CD4-positive, alpha-beta memory T cell (primary cell): ENCODE measurements at regions of chr17 and their contacts with region 1.

Region 1: GRCh38 chr17:32319548-32319905 is 22.4 kb downstream of the C17orf75 start:
- DNase-seq: peak; percentile 55 to 73 (median 61)
- H3K4me3 ChIP-seq: peak overlapping the region in 1 of 2 donors; percentile 40
- H3K4me3 Mint-ChIP-seq: peak overlapping the region; percentile 53 to 80 (median 75)
- H3K27ac ChIP-seq: no peak overlapping the region
- H3K27ac Mint-ChIP-seq: peak overlapping the region in 1 of 7 donors; percentile 36
- H3K4me1 ChIP-seq: peaks cover 14% of the 10 kb centered on the region
- H3K4me1 Mint-ChIP-seq: peaks cover 7 to 25% (median 12%) of the 10 kb centered on the region in 4 donors
- H3K27me3 ChIP-seq: no peaks in the 10 kb centered on the region
- H3K27me3 Mint-ChIP-seq: peaks cover 3 to 7% of the 10 kb centered on the region in 2 donors

Region 2: GRCh38 chr17:32206861-32207260 is 112.7 kb before region 1 on chr17:
- CTCF ChIA-PET with region 1: no interaction called
- POLR2A ChIA-PET with region 1: no interaction called
- intact Hi-C with region 1: loop called (anchors 2 kb)
- DNase-seq: no peak
- H3K4me3 ChIP-seq: no peak overlapping the region
- H3K4me3 Mint-ChIP-seq: no peak overlapping the region
- H3K27ac ChIP-seq: no peak overlapping the region
- H3K27ac Mint-ChIP-seq: no peak overlapping the region
- H3K4me1 ChIP-seq: no peaks in the 10 kb centered on the region
- H3K4me1 Mint-ChIP-seq: peaks cover 0 to 3% (median 0%) of the 10 kb centered on the region in 4 donors
- H3K27me3 ChIP-seq: no peaks in the 10 kb centered on the region
- H3K27me3 Mint-ChIP-seq: no peaks in the 10 kb centered on the region

Region 3: GRCh38 chr17:32253117-32253611 is 66.4 kb before region 1 on chr17:
- CTCF ChIA-PET with region 1: interaction called, 61 read pairs
- POLR2A ChIA-PET with region 1: no interaction called
- intact Hi-C with region 1: loop called (anchors 1 kb)
- DNase-seq: peak; percentile 41 to 62 (median 50)
- H3K4me3 ChIP-seq: no peak overlapping the region
- H3K4me3 Mint-ChIP-seq: no peak overlapping the region
- H3K27ac ChIP-seq: no peak overlapping the region
- H3K27ac Mint-ChIP-seq: no peak overlapping the region
- H3K4me1 ChIP-seq: no peaks in the 10 kb centered on the region
- H3K4me1 Mint-ChIP-seq: no peaks in the 10 kb centered on the region
- H3K27me3 ChIP-seq: no peaks in the 10 kb centered on the region
- H3K27me3 Mint-ChIP-seq: peaks cover 1 to 2% of the 10 kb centered on the region in 2 donors

Region 4: GRCh38 chr17:32275060-32276042 is 44.2 kb before region 1 on chr17:
- CTCF ChIA-PET with region 1: no interaction called
- POLR2A ChIA-PET with region 1: no interaction called
- intact Hi-C with region 1: no loop called
- DNase-seq: no peak
- H3K4me3 ChIP-seq: no peak overlapping the region
- H3K4me3 Mint-ChIP-seq: no peak overlapping the region
- H3K27ac ChIP-seq: no peak overlapping the region
- H3K27ac Mint-ChIP-seq: no peak overlapping the region
- H3K4me1 ChIP-seq: no peaks in the 10 kb centered on the region
- H3K4me1 Mint-ChIP-seq: no peaks in the 10 kb centered on the region
- H3K27me3 ChIP-seq: peaks cover 2% of the 10 kb centered on the region
- H3K27me3 Mint-ChIP-seq: peaks cover 2 to 14% of the 10 kb centered on the region in 2 donors

Region 5: DNA sequence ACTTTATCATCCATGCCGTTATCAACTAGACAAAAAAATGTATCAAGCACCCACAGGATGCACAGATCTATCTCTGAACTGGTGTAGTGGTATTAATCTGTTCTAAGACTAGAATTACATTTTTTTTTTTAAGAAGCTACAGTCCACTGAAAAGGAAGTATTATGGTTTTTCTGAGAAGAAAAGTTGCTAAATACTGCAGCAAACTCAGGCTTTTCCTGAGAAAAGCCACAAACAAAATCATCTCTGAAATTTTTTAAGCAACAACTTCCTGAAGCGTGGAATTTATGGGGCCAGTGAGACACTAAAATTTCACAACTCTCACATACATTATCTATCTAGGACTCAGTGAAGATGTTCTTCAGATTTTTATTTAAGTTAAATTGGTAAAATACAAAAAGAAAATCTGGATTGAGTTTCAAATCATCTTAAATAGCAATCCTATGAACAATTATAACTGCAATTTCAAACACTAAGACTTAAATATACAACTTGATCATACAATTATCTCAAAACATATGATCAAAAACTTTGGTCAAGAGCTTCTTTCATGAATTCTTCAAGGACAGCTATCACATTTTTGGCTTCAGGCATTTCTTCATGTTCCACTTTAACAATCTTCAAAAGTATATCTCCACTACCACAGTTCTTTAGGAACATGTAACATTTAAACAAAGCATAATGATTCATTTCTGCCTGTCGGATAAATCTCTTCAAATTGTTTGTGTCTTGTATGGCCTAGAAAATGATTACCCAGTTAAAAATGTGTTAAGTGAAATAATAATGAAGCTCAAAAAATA is 11.9 kb after region 1 on chr17:
- CTCF ChIA-PET with region 1: interaction called, 36 read pairs
- POLR2A ChIA-PET with region 1: no interaction called
- intact Hi-C with region 1: no loop called
- DNase-seq: no peak
- H3K4me3 ChIP-seq: no peak overlapping the region
- H3K4me3 Mint-ChIP-seq: peak overlapping the region in 5 of 8 donors; percentile 47 to 77 (median 55)
- H3K27ac ChIP-seq: no peak overlapping the region
- H3K27ac Mint-ChIP-seq: peak overlapping the region; percentile 18 to 90 (median 74)
- H3K4me1 ChIP-seq: peaks cover 20% of the 10 kb centered on the region
- H3K4me1 Mint-ChIP-seq: peaks cover 16 to 24% (median 20%) of the 10 kb centered on the region in 4 donors
- H3K27me3 ChIP-seq: no peaks in the 10 kb centered on the region
- H3K27me3 Mint-ChIP-seq: no peaks in the 10 kb centered on the region

Region 6: GRCh38 chr17:32370426-32370825 is 50.9 kb after region 1 on chr17:
- CTCF ChIA-PET with region 1: no interaction called
- POLR2A ChIA-PET with region 1: no interaction called
- intact Hi-C with region 1: no loop called
- DNase-seq: no peak
- H3K4me3 ChIP-seq: no peak overlapping the region
- H3K4me3 Mint-ChIP-seq: no peak overlapping the region
- H3K27ac ChIP-seq: no peak overlapping the region
- H3K27ac Mint-ChIP-seq: no peak overlapping the region
- H3K4me1 ChIP-seq: peaks cover 5% of the 10 kb centered on the region
- H3K4me1 Mint-ChIP-seq: peaks cover 13 to 21% (median 15%) of the 10 kb centered on the region in 4 donors
- H3K27me3 ChIP-seq: no peaks in the 10 kb centered on the region
- H3K27me3 Mint-ChIP-seq: no peaks in the 10 kb centered on the region

Region 7: DNA sequence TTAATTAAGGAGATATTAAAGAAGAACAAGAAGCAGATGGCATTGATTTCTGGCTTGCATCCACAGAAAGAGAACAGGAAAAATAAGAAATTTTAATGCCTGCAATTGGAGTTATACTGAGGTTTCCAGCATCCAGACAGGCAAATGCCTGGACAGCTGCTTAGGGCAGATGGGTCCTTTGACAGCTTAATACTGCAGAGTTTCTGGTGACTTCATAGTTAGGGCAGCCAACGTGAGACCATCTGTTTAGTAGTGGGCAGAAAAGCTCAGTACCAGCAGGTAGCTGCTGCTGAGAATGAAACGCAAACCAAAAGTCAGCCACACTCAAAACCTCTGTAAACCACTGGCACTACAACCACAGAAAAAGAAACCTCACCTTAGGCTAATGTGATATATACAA is 277.1 kb after region 1 on chr17:
- CTCF ChIA-PET with region 1: no interaction called
- POLR2A ChIA-PET with region 1: no interaction called
- intact Hi-C with region 1: no loop called
- DNase-seq: no peak
- H3K4me3 ChIP-seq: no peak overlapping the region
- H3K4me3 Mint-ChIP-seq: no peak overlapping the region
- H3K27ac ChIP-seq: no peak overlapping the region
- H3K27ac Mint-ChIP-seq: no peak overlapping the region
- H3K4me1 ChIP-seq: no peaks in the 10 kb centered on the region
- H3K4me1 Mint-ChIP-seq: no peaks in the 10 kb centered on the region
- H3K27me3 ChIP-seq: no peaks in the 10 kb centered on the region
- H3K27me3 Mint-ChIP-seq: no peaks in the 10 kb centered on the region